ENCODE measurements at regions of chr12 and their contacts with region 1.

Region 1: GRCh38 chr12:24991209-24992049 is 42.5 kb upstream of the BCAT1 start:
- DNase-seq: peak in 1 of 2 donors; percentile 84
- ATAC-seq: peak; percentile 90 to 98 (median 96)
- H3K4me3 ChIP-seq: no peak overlapping the region
- H3K4me3 Mint-ChIP-seq: no peak overlapping the region
- H3K27ac ChIP-seq: no peak overlapping the region
- H3K27ac Mint-ChIP-seq: no peak overlapping the region
- H3K4me1 ChIP-seq: no peaks in the 10 kb centered on the region
- H3K4me1 Mint-ChIP-seq: no peaks in the 10 kb centered on the region
- H3K27me3 ChIP-seq: no peaks in the 10 kb centered on the region
- H3K27me3 Mint-ChIP-seq: peaks cover 7 to 13% of the 10 kb centered on the region in 2 donors
- CTCF ChIP-seq: peak; percentile 75

Region 2: GRCh38 chr12:24822121-24822899 is 169.1 kb before region 1 on chr12:
- intact Hi-C with region 1: no loop called
- DNase-seq: no peak
- ATAC-seq: no peak
- H3K4me3 ChIP-seq: no peak overlapping the region
- H3K4me3 Mint-ChIP-seq: no peak overlapping the region
- H3K27ac ChIP-seq: no peak overlapping the region
- H3K27ac Mint-ChIP-seq: no peak overlapping the region
- H3K4me1 ChIP-seq: no peaks in the 10 kb centered on the region
- H3K4me1 Mint-ChIP-seq: no peaks in the 10 kb centered on the region
- H3K27me3 ChIP-seq: no peaks in the 10 kb centered on the region
- H3K27me3 Mint-ChIP-seq: no peaks in the 10 kb centered on the region
- CTCF ChIP-seq: no peak

Region 3: DNA sequence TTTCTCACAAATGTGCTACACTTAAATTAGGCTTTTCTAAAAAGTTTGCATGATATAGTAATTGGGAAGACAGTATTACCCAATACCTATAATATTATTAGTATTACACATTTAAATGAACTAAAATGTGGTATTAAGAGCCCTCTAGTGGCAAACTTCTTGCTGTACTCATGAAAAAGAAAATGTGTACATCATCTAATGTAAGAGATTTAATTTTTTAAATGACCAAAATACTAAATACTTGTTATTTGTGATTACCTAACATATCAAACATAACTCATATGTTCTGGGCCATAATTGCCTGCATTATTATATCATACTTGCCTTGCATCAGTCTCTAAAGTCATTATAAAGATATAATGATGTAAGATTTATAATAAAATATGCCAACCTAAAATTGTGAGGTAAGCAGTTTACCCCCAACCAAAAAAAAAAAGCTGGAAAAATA is 139.3 kb after region 1 on chr12:
- intact Hi-C with region 1: loop called (anchors 1 kb)
- DNase-seq: peak in 1 of 2 donors; percentile 65
- ATAC-seq: peak in 1 of 3 donors; percentile 42
- H3K4me3 ChIP-seq: no peak overlapping the region
- H3K4me3 Mint-ChIP-seq: no peak overlapping the region
- H3K27ac ChIP-seq: no peak overlapping the region
- H3K27ac Mint-ChIP-seq: no peak overlapping the region
- H3K4me1 ChIP-seq: no peaks in the 10 kb centered on the region
- H3K4me1 Mint-ChIP-seq: no peaks in the 10 kb centered on the region
- H3K27me3 ChIP-seq: no peaks in the 10 kb centered on the region
- H3K27me3 Mint-ChIP-seq: peaks cover 0 to 3% of the 10 kb centered on the region in 2 donors
- CTCF ChIP-seq: peak; percentile 86

Region 4: DNA sequence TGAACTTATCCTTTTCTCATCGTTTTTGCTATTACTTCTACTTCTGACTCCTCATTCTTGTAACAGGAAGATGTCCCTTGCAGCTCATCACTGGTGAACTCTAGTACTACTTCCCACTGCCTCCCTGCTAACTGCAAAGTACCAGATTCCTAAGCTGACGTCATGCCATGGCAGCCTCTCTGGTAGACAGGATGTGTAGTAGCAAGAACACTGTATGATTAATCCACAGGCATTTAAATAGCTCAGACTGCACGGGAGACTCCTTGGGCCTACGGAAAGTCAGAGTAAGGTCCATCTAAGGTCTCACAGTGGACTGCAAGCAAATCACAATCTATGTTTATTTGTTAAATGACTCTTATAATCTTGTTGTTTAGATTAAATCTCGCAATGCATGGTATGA is 160.0 kb after region 1 on chr12:
- intact Hi-C with region 1: loop called (anchors 1 kb)
- DNase-seq: no peak
- ATAC-seq: no peak
- H3K4me3 ChIP-seq: no peak overlapping the region
- H3K4me3 Mint-ChIP-seq: no peak overlapping the region
- H3K27ac ChIP-seq: no peak overlapping the region
- H3K27ac Mint-ChIP-seq: no peak overlapping the region
- H3K4me1 ChIP-seq: no peaks in the 10 kb centered on the region
- H3K4me1 Mint-ChIP-seq: no peaks in the 10 kb centered on the region
- H3K27me3 ChIP-seq: no peaks in the 10 kb centered on the region
- H3K27me3 Mint-ChIP-seq: no peaks in the 10 kb centered on the region
- CTCF ChIP-seq: no peak

Region 5: DNA sequence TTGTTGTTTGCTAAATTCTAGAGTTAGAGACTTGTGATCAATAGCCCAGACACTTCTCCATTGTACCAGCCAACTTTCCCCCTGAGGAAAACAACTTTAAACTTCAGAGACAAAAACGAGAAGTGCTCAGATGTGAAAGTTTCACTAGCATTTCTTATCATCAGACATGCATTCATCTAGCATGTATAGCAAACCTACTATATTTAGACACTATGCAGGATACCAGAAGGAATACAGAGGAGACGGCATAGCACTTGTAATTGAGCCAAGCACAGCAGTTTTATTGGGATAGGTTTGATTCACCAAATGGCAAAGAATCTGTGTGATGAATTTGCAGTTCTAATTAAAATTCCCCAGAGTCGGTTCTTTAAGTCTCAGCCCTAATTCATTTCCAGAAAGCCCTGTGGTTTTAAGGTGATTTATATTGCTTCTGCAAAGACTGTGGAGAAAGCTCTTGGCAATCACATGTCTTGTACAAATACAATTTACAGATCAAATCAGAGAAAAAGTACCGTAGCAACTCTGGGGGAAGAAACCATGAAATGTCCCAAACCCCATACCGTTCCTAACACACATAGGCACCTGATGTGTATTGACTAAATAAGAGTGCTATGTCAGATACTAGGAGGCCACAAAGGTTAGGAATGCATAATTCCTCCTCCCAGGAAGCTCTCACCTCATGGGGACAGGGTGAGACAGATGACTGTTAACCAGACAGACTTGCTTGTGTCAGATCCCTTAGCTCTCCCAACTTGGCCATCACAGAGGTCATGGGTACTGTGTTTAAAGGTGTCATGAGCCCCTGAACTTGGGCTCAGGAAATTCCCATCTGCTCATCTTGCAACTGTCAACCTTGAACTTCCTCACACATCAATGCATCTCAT is 328.9 kb after region 1 on chr12:
- intact Hi-C with region 1: no loop called
- DNase-seq: peak in 1 of 2 donors; percentile 10
- ATAC-seq: no peak
- H3K4me3 ChIP-seq: no peak overlapping the region
- H3K4me3 Mint-ChIP-seq: no peak overlapping the region
- H3K27ac ChIP-seq: no peak overlapping the region
- H3K27ac Mint-ChIP-seq: no peak overlapping the region
- H3K4me1 ChIP-seq: peaks cover 11% of the 10 kb centered on the region
- H3K4me1 Mint-ChIP-seq: peaks cover 28 to 36% of the 10 kb centered on the region in 2 donors
- H3K27me3 ChIP-seq: no peaks in the 10 kb centered on the region
- H3K27me3 Mint-ChIP-seq: no peaks in the 10 kb centered on the region
- CTCF ChIP-seq: no peak

Measured in natural killer cell (primary cell).